Naive thymus-derived CD4-positive, alpha-beta T cell (primary cell): ENCODE measurements at regions of chr3 and their contacts with region 1.

Region 1: DNA sequence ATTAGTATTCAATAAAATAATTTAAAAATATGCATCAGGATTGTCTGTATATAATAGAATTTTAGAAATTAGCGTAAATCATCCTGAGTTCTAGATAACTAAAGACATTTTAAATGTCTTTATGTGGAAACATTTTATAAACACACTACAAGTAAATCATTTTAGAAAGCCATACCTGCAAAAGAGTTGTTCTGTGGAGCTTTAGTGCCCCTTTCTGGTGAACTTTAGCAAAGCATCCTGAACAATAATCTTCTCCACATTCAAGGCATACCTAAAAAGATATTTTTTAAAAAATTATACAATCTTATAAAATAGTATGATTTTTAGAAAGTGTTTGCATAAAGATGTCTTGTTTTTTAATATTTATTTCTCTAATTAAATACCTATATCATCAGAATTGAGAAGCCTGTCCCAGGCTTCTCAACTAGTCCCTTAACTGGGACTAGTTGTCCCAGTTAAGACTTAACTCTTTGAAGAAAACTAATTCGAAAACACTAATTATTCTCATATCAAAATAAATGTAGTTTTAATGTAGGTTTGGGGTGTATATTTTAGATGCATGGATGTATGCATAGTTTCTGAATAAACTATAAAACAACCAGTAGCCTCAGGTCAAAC is 29.7 kb downstream of the ZBBX start:
- DNase-seq: no peak
- ATAC-seq: no peak
- H3K4me3 ChIP-seq: no peak overlapping the region
- H3K4me3 Mint-ChIP-seq: no peak overlapping the region
- H3K27ac ChIP-seq: no peak overlapping the region
- H3K27ac Mint-ChIP-seq: no peak overlapping the region
- H3K4me1 ChIP-seq: no peaks in the 10 kb centered on the region
- H3K4me1 Mint-ChIP-seq: peaks cover 0 to 3% (median 0%) of the 10 kb centered on the region in 7 donors
- H3K27me3 ChIP-seq: no peaks in the 10 kb centered on the region
- H3K27me3 Mint-ChIP-seq: peaks cover 0 to 22% (median 15%) of the 10 kb centered on the region in 5 donors

Region 2: DNA sequence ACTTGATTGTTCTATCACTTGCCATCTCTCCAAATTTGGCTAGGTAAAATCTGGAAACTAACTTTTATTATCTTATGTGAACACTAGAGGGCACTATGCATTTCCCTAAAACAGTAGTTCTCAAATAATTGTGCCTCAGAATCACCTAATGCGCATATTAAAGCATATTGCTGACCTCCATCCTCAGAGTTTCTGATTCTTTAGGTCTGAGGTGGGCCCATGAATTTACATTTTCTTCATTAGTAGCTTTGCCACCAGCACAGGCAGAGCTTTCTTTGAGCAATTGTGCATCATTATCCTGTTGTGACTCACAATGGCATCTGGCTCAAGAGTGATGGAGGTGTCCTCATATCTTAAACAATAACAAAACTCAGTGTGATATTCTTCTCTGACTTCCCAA is 1495.7 kb before region 1 on chr3:
- CTCF ChIA-PET with region 1: no interaction called
- POLR2A ChIA-PET with region 1: no interaction called
- intact Hi-C with region 1: loop called in 1 of 2 experiments (anchors 2 kb)
- DNase-seq: no peak
- ATAC-seq: no peak
- H3K4me3 ChIP-seq: no peak overlapping the region
- H3K4me3 Mint-ChIP-seq: no peak overlapping the region
- H3K27ac ChIP-seq: no peak overlapping the region
- H3K27ac Mint-ChIP-seq: no peak overlapping the region
- H3K4me1 ChIP-seq: no peaks in the 10 kb centered on the region
- H3K4me1 Mint-ChIP-seq: no peaks in the 10 kb centered on the region
- H3K27me3 ChIP-seq: no peaks in the 10 kb centered on the region
- H3K27me3 Mint-ChIP-seq: no peaks in the 10 kb centered on the region

Region 3: DNA sequence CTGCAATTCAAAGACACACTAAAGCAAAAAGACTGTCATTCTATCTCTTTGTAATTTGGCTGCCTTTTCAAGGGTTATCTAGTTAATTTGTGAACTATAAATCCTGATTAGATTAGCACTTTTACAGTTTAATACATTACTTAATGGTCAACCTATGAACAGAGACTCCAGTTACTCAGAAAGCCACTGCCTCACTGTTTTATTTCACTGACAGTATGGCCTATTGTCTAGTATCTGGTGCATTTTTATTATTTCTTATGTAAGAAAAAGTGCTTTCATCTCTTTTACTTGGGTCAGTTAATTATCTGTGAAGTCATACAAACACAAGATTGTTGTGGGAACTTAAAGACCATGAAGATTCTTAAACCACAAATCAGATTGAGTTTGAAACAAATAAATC is 104.1 kb before region 1 on chr3:
- CTCF ChIA-PET with region 1: no interaction called
- POLR2A ChIA-PET with region 1: no interaction called
- intact Hi-C with region 1: no loop called
- DNase-seq: no peak
- ATAC-seq: no peak
- H3K4me3 ChIP-seq: no peak overlapping the region
- H3K4me3 Mint-ChIP-seq: no peak overlapping the region
- H3K27ac ChIP-seq: no peak overlapping the region
- H3K27ac Mint-ChIP-seq: no peak overlapping the region
- H3K4me1 ChIP-seq: no peaks in the 10 kb centered on the region
- H3K4me1 Mint-ChIP-seq: no peaks in the 10 kb centered on the region
- H3K27me3 ChIP-seq: no peaks in the 10 kb centered on the region
- H3K27me3 Mint-ChIP-seq: no peaks in the 10 kb centered on the region

Region 4: GRCh38 chr3:167554898-167555297 is 204.5 kb after region 1 on chr3:
- CTCF ChIA-PET with region 1: no interaction called
- POLR2A ChIA-PET with region 1: no interaction called
- intact Hi-C with region 1: no loop called
- DNase-seq: no peak
- ATAC-seq: no peak
- H3K4me3 ChIP-seq: no peak overlapping the region
- H3K4me3 Mint-ChIP-seq: no peak overlapping the region
- H3K27ac ChIP-seq: no peak overlapping the region
- H3K27ac Mint-ChIP-seq: no peak overlapping the region
- H3K4me1 ChIP-seq: no peaks in the 10 kb centered on the region
- H3K4me1 Mint-ChIP-seq: no peaks in the 10 kb centered on the region
- H3K27me3 ChIP-seq: no peaks in the 10 kb centered on the region
- H3K27me3 Mint-ChIP-seq: peaks cover 0 to 11% (median 0%) of the 10 kb centered on the region in 5 donors

Region 5: GRCh38 chr3:167653760-167654159 is 303.4 kb after region 1 on chr3 and contains the start of gene WDR49:
- CTCF ChIA-PET with region 1: no interaction called
- POLR2A ChIA-PET with region 1: no interaction called
- intact Hi-C with region 1: no loop called
- DNase-seq: no peak
- ATAC-seq: no peak
- H3K4me3 ChIP-seq: no peak within 1 kb of the TSS
- H3K4me3 Mint-ChIP-seq: peak within 1 kb of the TSS in 1 of 10 donors; percentile 27
- H3K27ac ChIP-seq: no peak within 1 kb of the TSS
- H3K27ac Mint-ChIP-seq: no peak within 1 kb of the TSS
- H3K4me1 ChIP-seq: no peaks in the 10 kb centered on the region
- H3K4me1 Mint-ChIP-seq: peaks cover 2 to 18% (median 11%) of the 10 kb centered on the region in 7 donors
- H3K27me3 ChIP-seq: no peaks in the 10 kb centered on the region
- H3K27me3 Mint-ChIP-seq: peaks cover 3 to 16% (median 7%) of the 10 kb centered on the region in 5 donors
- total RNA-seq, gene WDR49: 0.11 to 2.4 (median 0.29) TPM